HCT116 (cell line): ENCODE measurements at regions of chr18 and their contacts with region 1.

Region 1: GRCh38 chr18:35729991-35730668 is 148.6 kb downstream of the GALNT1 start:
- DNase-seq: no peak
- ATAC-seq: no peak
- H3K4me3 ChIP-seq: no peak overlapping the region
- H3K27ac ChIP-seq: no peak overlapping the region
- H3K4me1 ChIP-seq: no peaks in the 10 kb centered on the region
- H3K27me3 ChIP-seq: no peaks in the 10 kb centered on the region
- CTCF ChIP-seq: no peak
- POLR2A ChIP-seq: no peak
- RAD21 ChIP-seq: no peak

Region 2: GRCh38 chr18:35786365-35787042 is 56.4 kb after region 1 on chr18:
- CTCF ChIA-PET with region 1: no interaction called
- POLR2A ChIA-PET with region 1: no interaction called
- RAD21 ChIA-PET with region 1: no interaction called
- intact Hi-C with region 1: loop called (anchors 10 kb)
- DNase-seq: no peak
- ATAC-seq: no peak
- H3K4me3 ChIP-seq: no peak overlapping the region
- H3K27ac ChIP-seq: no peak overlapping the region
- H3K4me1 ChIP-seq: no peaks in the 10 kb centered on the region
- H3K27me3 ChIP-seq: peaks cover 10% of the 10 kb centered on the region; the same call in 1 of the 2 replicates
- CTCF ChIP-seq: no peak
- POLR2A ChIP-seq: no peak
- RAD21 ChIP-seq: no peak

Region 3: DNA sequence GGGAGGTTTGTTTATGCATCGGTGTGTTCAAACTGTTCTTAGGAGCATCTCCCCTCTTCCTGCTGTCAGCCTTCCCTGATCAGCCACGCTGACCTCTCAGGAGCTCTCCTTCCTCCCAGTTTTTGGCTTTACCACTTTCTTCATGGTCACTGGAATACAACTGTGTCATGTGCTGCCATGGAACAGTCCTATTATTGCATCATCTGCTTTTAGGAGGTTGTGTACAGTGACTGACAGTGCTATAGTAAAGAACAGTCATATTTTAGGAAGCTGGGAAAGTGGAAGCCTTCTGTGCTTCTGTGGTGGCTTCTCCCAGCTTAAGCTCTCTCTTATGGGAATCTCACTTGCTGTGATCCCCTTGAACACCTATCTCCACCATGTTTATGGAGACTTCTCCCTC is 933.2 kb after region 1 on chr18:
- CTCF ChIA-PET with region 1: no interaction called
- POLR2A ChIA-PET with region 1: no interaction called
- RAD21 ChIA-PET with region 1: no interaction called
- intact Hi-C with region 1: no loop called
- DNase-seq: no peak
- ATAC-seq: no peak
- H3K4me3 ChIP-seq: no peak overlapping the region
- H3K27ac ChIP-seq: no peak overlapping the region
- H3K4me1 ChIP-seq: no peaks in the 10 kb centered on the region
- H3K27me3 ChIP-seq: no peaks in the 10 kb centered on the region
- CTCF ChIP-seq: no peak
- POLR2A ChIP-seq: no peak
- RAD21 ChIP-seq: no peak